Activated T-helper 2 cell treated with anti-CD3 and anti-CD28 coated beads, Interferon-gamma antibody, Interleukin-2, Interleukin-4, amounts not matched to agents 10 μg/mL and 5 μg/mL and 100 μg/mL, durations not matched to agents 14 hours and 24 hours and 36 hours (primary cell): ENCODE measurements at regions of chr6 and their contacts with region 1.

Region 1: DNA sequence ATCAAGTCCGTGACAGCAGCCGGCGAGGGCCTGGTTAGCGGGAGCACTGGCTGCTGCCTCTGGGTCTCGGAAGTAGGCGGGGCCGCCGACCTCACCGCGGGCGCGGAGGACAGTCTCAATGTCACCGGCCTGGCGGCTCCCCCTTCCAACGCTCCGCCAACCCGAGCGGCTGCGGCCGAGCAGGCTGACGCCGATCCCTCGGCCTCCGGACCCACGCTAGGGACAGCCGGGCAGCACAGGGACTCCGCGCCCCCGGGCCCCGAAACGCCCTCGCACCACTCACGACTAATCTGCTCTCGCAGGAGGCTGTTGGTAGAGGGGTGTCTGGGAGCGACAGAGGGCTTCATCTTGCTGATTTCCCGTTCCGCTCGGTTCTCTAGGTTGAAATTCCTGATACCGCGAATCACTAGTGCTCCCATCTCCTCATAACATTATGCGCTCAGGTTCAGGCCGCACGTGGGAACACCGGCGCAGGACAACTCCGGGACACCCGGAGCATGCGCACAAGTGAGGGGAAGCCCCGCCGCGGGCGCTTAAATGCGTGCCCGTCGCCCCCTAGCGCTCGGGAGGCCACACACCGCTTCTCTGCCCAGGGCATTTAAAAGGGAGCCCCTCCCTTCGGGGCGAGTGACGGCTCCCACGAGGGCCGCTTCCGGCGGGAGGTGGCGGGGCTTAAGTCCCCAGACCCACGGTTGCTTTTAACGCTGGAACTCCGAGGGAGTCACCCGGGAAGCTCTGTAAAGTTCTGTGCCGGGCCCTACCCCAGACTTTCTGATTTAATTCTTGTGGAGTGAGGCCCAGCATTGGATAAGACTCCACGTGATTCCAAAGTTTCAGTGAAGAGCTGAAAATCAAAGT is at the start of gene NDUFAF4:
- DNase-seq: peak; percentile 92
- H3K4me3 Mint-ChIP-seq: peak within 1 kb of the TSS; percentile 94
- H3K27ac Mint-ChIP-seq: peak within 1 kb of the TSS; percentile 91
- H3K4me1 Mint-ChIP-seq: peaks cover 19% of the 10 kb centered on the region
- H3K27me3 Mint-ChIP-seq: peaks cover 7% of the 10 kb centered on the region
- total RNA-seq, gene NDUFAF4: 59.8 and 63.0 TPM in 2 replicates

Region 2: DNA sequence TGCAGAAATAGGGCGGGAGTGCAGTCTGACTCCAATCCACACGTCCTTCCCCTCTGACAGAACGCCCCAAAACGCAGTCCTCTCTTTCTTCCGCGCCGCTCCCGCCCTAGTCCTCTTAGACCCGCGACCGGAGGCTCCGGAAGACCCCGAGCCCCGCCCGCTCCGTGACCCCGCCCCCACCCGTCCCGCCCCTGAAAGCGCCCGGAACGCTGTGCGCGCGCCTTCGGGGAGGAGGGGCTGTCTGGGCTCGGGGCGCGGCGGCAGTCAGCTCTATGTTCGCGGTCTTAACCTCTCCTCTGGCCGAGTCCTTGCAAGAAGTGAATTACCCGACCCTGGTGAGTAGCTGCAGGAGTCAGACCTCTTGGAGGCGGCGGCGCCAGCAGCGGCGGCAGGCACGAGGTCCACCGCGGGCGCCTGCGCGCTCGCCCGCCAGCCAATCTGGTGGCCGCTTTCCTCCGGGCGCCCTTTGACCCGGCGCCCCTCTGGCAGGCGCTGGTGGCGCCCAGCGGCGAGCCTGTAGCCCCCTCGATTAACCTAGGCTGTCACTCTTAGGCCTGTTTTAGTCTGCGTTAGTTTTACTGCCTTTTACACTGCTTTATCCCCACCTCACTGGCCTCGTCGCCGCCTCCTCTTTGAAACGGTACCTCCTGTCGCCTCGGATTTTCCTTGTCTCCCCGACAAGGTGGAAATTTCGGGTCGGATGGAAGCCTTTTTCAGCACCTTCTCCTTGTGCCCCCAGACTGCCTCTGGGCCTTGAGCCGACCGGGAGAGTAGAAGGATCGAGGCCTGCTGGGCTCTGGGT is 1320.1 kb before region 1 on chr6 and contains the start of gene MANEA:
- intact Hi-C with region 1: loop called (anchors 1 kb)
- DNase-seq: peak; percentile 79
- H3K4me3 Mint-ChIP-seq: peak within 1 kb of the TSS; percentile 95
- H3K27ac Mint-ChIP-seq: peak within 1 kb of the TSS; percentile 99
- H3K4me1 Mint-ChIP-seq: peaks cover 45% of the 10 kb centered on the region
- H3K27me3 Mint-ChIP-seq: no peaks in the 10 kb centered on the region
- total RNA-seq, gene MANEA: 22.5 and 23.1 TPM in 2 replicates

Region 3: DNA sequence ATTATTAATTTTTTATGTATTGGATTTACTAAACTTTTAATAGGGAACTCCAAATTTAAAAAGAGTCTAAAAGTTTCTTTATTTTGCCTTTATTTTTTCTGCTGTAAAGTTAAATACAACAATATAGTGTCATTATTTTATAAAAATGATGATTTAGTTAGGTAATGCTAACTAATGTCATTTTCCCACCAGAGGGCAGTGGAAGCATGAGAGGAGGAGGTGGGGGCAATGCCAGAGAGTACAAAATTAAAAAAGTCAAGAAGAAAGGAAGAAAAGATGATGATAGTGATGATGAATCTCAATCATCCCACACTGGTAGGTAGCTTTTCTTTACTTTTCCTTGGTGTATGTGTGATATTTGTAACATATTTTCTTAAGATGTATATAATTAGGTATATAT is 354.9 kb before region 1 on chr6:
- intact Hi-C with region 1: loop called (anchors 5 kb)
- DNase-seq: no peak
- H3K4me3 Mint-ChIP-seq: no peak overlapping the region
- H3K27ac Mint-ChIP-seq: no peak overlapping the region
- H3K4me1 Mint-ChIP-seq: peaks cover 1% of the 10 kb centered on the region
- H3K27me3 Mint-ChIP-seq: no peaks in the 10 kb centered on the region

Region 4: DNA sequence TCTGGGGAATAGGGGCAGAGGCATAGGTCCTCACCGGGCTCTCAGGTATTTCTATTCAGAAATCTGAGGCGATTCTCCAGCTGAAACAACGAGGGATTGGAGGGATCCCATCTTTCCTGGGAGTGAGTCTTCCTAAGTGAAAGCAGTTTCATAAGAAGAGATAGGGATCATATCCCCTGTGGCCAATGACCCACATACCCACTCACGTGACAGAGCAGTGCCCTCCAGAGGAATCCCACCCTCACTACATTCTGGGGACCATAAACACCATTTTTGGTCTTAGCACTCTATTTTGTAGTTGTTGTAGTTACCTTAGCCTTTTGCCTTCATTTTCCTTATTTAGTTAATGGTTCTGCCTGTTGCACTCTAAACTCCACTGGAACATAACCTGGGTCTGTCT is 181.4 kb before region 1 on chr6:
- intact Hi-C with region 1: no loop called
- DNase-seq: no peak
- H3K4me3 Mint-ChIP-seq: no peak overlapping the region
- H3K27ac Mint-ChIP-seq: no peak overlapping the region
- H3K4me1 Mint-ChIP-seq: no peaks in the 10 kb centered on the region
- H3K27me3 Mint-ChIP-seq: peaks cover 4% of the 10 kb centered on the region

Region 5: DNA sequence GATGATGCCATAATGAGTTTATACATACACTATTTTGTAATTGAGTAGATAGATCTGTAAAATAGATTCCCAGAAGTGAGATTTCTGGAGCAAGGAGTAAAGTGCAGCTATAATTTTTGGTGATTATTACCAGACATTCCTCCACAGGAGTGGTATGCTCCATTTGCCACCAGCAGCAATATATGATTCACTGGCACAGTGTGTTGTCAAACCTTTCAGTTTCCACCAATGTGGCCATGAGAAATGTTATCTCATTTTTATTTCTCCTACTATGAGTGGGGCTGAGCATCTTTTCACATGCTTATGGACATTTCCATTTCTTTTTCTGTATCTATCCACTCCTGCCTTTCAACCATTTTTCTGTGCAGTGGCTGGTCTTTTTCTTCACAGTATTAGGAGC is 130.8 kb before region 1 on chr6:
- intact Hi-C with region 1: loop called (anchors 2 kb)
- DNase-seq: no peak
- H3K4me3 Mint-ChIP-seq: no peak overlapping the region
- H3K27ac Mint-ChIP-seq: no peak overlapping the region
- H3K4me1 Mint-ChIP-seq: peaks cover 1% of the 10 kb centered on the region
- H3K27me3 Mint-ChIP-seq: peaks cover 24% of the 10 kb centered on the region

Region 6: GRCh38 chr6:96878143-96878542 is 19.5 kb before region 1 on chr6:
- intact Hi-C with region 1: no loop called
- DNase-seq: no peak
- H3K4me3 Mint-ChIP-seq: no peak overlapping the region
- H3K27ac Mint-ChIP-seq: no peak overlapping the region
- H3K4me1 Mint-ChIP-seq: no peaks in the 10 kb centered on the region
- H3K27me3 Mint-ChIP-seq: peaks cover 9% of the 10 kb centered on the region

Region 7: DNA sequence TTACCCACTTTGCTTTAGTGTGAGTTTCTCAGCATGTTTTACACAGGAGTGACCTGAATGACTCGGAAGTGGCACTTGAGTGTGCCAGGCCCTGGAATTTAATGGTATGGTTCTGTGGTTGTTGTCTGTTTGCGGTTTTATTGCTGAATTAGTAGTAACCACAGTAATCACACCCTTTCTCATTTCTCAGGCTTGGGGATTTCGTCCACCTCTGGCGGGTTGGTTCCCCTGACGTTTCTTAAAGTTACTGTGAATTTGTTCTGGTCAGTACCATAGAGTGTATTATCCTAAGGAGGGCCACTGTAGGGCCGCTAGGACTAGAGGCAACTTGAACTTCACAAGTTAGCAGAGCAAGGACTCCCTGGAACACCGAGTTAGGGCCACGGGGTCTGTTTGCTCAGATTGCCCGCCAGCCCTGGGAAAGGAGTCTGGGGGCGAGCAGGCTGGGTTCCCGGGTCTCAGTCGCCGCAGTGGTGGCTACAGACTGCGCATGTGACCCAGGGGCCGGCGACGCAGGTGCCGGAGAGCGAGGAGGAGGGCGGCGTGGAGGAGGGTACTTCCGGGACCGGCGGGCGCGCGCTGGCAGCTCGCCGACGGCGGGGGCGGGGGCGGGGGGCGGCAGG is 26.4 kb after region 1 on chr6:
- intact Hi-C with region 1: loop called (anchors 1 kb)
- DNase-seq: no peak
- H3K4me3 Mint-ChIP-seq: peak overlapping the region; percentile 89
- H3K27ac Mint-ChIP-seq: peak overlapping the region; percentile 89
- H3K4me1 Mint-ChIP-seq: peaks cover 35% of the 10 kb centered on the region
- H3K27me3 Mint-ChIP-seq: peaks cover 11% of the 10 kb centered on the region

Region 8: GRCh38 chr6:97282726-97283617 is 385.4 kb after region 1 on chr6 and contains the start of gene MMS22L:
- intact Hi-C with region 1: loop called (anchors 10 kb)
- DNase-seq: peak; percentile 92
- H3K4me3 Mint-ChIP-seq: peak within 1 kb of the TSS; percentile 89
- H3K27ac Mint-ChIP-seq: peak within 1 kb of the TSS; percentile 81
- H3K4me1 Mint-ChIP-seq: peaks cover 25% of the 10 kb centered on the region
- H3K27me3 Mint-ChIP-seq: peaks cover 12% of the 10 kb centered on the region
- total RNA-seq, gene MMS22L: 50.5 and 56.4 TPM in 2 replicates